Prostate gland (tissue), 2 donors: ENCODE measurements at regions of chr10 and their contacts with region 1.

Region 1: DNA sequence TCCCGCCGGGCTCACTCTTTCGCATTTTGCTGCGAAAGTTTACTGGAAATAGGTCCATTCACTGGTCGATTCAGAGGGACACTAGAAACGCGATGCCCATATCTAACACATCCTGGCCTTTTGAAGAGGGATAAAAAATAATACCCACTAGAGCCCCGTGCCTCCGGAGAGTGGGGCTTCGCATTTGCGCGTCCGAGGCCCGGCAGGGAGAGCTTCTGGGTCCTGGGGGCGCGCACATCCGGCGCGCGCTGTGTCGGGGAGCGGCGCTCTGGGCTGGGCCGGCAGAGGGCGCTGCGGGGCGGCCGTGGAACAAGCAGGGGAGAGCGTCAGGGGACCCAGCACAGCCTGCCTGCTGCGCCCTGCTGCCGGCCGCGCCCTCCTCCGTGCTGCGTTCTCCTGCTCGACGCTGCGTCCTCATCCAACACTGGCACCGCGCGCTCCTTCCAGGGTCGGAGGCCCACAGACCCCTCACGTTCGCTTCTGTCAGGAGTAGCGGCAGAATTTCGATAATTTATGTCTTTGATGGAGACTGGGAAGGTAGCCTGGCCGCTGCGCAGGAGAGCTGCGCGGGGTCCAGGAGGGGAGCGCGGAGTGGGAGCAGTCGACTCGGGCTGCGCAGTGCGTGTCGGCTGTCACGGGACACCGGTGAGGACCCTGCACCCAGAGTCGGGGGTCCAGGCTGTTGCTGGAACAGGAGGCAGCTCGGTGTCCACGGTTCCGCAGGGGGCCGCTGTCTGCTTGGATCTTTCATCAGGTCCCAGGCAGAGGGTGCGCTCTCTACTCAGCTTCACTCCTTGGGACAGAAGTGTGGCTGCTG is 41.5 kb upstream of the ZNF32 start:
- DNase-seq: peak; percentile 73
- H3K4me3 ChIP-seq: peak overlapping the region; percentile 37 to 42
- H3K27ac ChIP-seq: peak overlapping the region; percentile 44 to 58
- H3K4me1 ChIP-seq: no peaks in the 10 kb centered on the region
- H3K27me3 ChIP-seq: no peaks in the 10 kb centered on the region
- CTCF ChIP-seq: peak; percentile 88 to 94 (median 90)
- POLR2A ChIP-seq: no peak

Region 2: DNA sequence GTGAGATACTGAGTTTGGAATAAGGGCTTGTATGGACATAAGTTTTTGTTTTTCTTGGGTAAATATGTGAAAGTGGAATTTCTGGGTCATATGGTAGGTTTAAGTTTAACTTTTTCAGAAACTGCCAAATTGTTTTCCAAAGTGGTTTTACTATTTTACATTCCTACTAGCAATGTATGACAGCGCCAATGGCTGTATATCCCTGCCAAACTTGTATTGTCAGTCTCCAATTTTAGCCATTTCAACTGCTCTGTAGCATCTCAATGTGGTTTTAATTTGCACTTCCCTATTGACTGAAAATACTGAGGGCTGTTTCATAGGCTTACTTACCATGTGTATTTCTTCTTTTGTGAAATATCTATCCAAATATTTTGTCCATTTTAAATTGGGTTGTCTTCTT is 49.0 kb after region 1 on chr10:
- intact Hi-C with region 1: no loop called
- DNase-seq: no peak
- H3K4me3 ChIP-seq: no peak overlapping the region
- H3K27ac ChIP-seq: no peak overlapping the region
- H3K4me1 ChIP-seq: no peaks in the 10 kb centered on the region
- H3K27me3 ChIP-seq: no peaks in the 10 kb centered on the region
- CTCF ChIP-seq: no peak
- POLR2A ChIP-seq: no peak

Region 3: GRCh38 chr10:43808136-43808535 is 118.0 kb after region 1 on chr10:
- intact Hi-C with region 1: no loop called
- DNase-seq: no peak
- H3K4me3 ChIP-seq: no peak overlapping the region
- H3K27ac ChIP-seq: no peak overlapping the region
- H3K4me1 ChIP-seq: no peaks in the 10 kb centered on the region
- H3K27me3 ChIP-seq: no peaks in the 10 kb centered on the region
- CTCF ChIP-seq: no peak
- POLR2A ChIP-seq: no peak

Region 4: GRCh38 chr10:43913676-43914385 is 223.7 kb after region 1 on chr10:
- intact Hi-C with region 1: loop called (anchors 5 kb)
- DNase-seq: no peak
- H3K4me3 ChIP-seq: no peak overlapping the region
- H3K27ac ChIP-seq: no peak overlapping the region
- H3K4me1 ChIP-seq: no peaks in the 10 kb centered on the region
- H3K27me3 ChIP-seq: no peaks in the 10 kb centered on the region
- CTCF ChIP-seq: no peak
- POLR2A ChIP-seq: no peak

Region 5: GRCh38 chr10:44051584-44052385 is 361.6 kb after region 1 on chr10:
- intact Hi-C with region 1: loop called (anchors 10 kb)
- DNase-seq: no peak
- H3K4me3 ChIP-seq: no peak overlapping the region
- H3K27ac ChIP-seq: no peak overlapping the region
- H3K4me1 ChIP-seq: peaks cover 2% of the 10 kb centered on the region
- H3K27me3 ChIP-seq: no peaks in the 10 kb centered on the region
- CTCF ChIP-seq: no peak
- POLR2A ChIP-seq: no peak

Region 6: DNA sequence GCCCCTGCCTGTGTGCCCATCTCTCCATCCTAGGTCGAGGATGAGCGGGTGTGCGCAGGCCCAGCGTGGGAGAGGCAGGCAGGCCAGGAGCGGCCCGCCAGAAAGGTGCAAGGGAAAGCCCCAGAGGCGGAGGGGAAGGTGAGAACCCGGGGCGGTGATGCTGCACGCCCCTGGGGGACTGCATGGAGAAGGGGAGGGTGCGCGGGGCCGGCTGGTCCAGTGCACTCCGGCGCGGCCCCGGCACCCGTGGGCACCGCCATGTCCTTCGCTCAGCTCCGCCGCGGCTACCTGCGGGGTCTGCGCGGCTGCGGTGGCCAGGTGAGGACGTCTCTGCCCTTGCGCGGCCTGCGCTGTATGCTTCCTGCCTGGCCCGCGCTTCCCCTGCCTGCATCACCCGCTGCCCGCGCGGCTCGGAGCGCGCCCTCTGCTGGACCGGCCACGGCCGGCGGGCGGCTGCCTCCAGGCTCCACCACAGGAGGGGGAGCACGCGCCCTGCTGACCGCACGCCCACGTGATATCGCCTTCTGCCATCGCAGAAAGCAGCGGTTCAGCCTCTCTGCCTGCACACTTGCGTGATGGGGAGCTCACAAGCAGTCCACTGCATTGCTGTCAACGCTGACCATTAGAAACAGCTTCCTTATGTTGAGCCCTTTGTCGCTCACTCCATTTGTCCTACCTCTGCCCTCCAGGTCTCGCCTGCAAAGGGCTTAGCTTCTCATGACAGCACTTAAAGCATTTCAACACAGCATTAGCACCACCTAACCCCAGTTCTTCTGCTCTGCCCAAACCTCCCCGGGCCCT is 620.8 kb after region 1 on chr10:
- intact Hi-C with region 1: loop called (anchors 2 kb)
- DNase-seq: peak; percentile 62
- H3K4me3 ChIP-seq: peak overlapping the region in 1 of 2 donors; percentile 15
- H3K27ac ChIP-seq: no peak overlapping the region
- H3K4me1 ChIP-seq: peaks cover 2% of the 10 kb centered on the region
- H3K27me3 ChIP-seq: no peaks in the 10 kb centered on the region
- CTCF ChIP-seq: peak; percentile 66 to 93 (median 88)
- POLR2A ChIP-seq: no peak

Region 7: DNA sequence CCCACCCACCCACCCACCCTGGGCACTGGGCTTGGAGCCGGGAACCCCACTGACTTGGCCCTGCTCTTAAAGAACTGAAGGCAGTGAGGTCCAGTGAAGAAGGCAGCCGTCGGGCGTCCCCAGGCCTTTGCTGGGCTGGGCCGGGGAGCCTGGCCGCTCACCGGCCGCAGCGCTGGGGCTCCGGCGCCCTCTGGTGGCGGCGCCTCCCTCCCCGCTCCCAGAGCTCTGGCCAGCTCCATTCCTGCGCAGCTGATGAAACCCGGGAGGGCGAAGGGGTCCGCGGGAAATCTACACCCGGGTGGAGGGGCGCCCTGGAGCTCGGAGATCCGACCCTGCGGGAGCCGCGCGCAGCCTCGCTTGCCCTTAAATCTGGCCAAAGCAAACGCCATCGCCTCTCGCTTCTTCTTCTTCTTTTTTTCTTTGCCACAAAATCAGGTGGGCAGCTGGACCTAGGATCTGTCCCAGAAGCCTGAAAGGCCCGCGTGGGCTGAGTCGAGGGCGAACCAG is 696.4 kb after region 1 on chr10:
- intact Hi-C with region 1: loop called (anchors 1 kb)
- DNase-seq: no peak
- H3K4me3 ChIP-seq: no peak overlapping the region
- H3K27ac ChIP-seq: no peak overlapping the region
- H3K4me1 ChIP-seq: peaks cover 4% of the 10 kb centered on the region
- H3K27me3 ChIP-seq: no peaks in the 10 kb centered on the region
- CTCF ChIP-seq: peak; percentile 75 to 87 (median 85)
- POLR2A ChIP-seq: no peak

Region 8: GRCh38 chr10:44857363-44858016 is 1167.3 kb after region 1 on chr10:
- intact Hi-C with region 1: loop called (anchors 5 kb)
- DNase-seq: no peak
- H3K4me3 ChIP-seq: no peak overlapping the region
- H3K27ac ChIP-seq: no peak overlapping the region
- H3K4me1 ChIP-seq: no peaks in the 10 kb centered on the region
- H3K27me3 ChIP-seq: no peaks in the 10 kb centered on the region
- CTCF ChIP-seq: peak; percentile 78 to 93 (median 86)
- POLR2A ChIP-seq: no peak